Esophagus muscularis mucosa (tissue), 4 donors: ENCODE measurements at regions of chr2 and their contacts with region 1.

Region 1: GRCh38 chr2:102187496-102188150 is 800 bp downstream of the IL1RL2 start:
- DNase-seq: no peak
- H3K4me3 ChIP-seq: peak overlapping the region; percentile 56 to 61 (median 58)
- H3K27ac ChIP-seq: peak overlapping the region; percentile 42 to 48 (median 46)
- H3K4me1 ChIP-seq: peaks cover 6 to 16% (median 14%) of the 10 kb centered on the region in 4 donors
- H3K27me3 ChIP-seq: peaks cover 0 to 12% (median 0%) of the 10 kb centered on the region in 4 donors
- CTCF ChIP-seq: peak; percentile 15 to 44 (median 16)
- EP300 ChIP-seq: no peak
- POLR2A ChIP-seq: no peak

Region 2: GRCh38 chr2:102094917-102095316 is 92.7 kb before region 1 on chr2:
- intact Hi-C with region 1: no loop called
- DNase-seq: no peak
- H3K4me3 ChIP-seq: no peak overlapping the region
- H3K27ac ChIP-seq: no peak overlapping the region
- H3K4me1 ChIP-seq: no peaks in the 10 kb centered on the region
- H3K27me3 ChIP-seq: no peaks in the 10 kb centered on the region
- CTCF ChIP-seq: no peak
- EP300 ChIP-seq: no peak
- POLR2A ChIP-seq: no peak

Region 3: GRCh38 chr2:102206666-102207341 is 19.2 kb after region 1 on chr2:
- intact Hi-C with region 1: no loop called
- DNase-seq: no peak
- H3K4me3 ChIP-seq: no peak overlapping the region
- H3K27ac ChIP-seq: no peak overlapping the region
- H3K4me1 ChIP-seq: no peaks in the 10 kb centered on the region
- H3K27me3 ChIP-seq: no peaks in the 10 kb centered on the region
- CTCF ChIP-seq: no peak
- EP300 ChIP-seq: no peak
- POLR2A ChIP-seq: no peak

Region 4: DNA sequence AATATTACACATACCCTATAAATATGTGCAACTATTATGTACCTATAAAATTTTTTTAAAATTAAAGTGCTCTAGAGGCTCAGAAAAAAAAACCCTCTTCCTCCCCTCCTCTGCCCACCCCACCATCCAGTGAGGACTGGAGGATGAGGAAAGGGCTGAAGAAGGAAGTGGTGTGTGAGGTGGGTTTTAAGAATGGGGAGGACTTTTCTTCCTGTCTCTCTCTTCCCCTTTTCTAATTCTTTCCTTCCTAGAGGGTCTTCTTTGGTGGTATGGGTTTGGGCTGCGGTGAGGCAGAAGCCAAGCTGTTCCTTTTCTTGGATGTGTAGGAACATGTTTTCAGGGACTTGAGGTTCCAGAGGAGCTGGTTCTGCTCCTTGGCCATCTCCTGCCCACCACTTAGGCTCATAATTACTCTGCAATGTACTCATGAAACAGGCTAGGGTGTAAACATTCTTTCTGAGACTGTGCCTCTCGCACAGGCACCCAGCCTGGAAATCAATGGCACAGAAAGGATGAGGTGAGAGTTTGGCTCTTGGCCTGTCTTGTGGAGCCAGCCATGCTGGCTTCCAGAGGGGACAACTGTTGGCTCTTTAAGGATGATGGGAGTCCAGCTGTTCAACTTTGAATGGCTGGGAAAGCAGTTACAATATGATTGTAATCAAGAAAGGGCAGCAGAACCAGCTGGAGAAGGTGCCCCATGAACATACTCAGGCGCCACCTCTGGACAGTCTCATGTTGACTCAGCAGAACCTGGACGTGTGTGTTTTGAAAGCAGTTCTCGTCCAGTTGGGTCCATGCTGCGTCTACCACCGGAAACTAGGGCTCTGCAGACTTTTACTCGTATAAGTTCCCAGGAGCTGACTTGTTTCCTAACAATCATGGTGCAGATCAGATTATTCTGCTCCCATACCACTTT is 37.5 kb after region 1 on chr2:
- intact Hi-C with region 1: loop called (anchors 5 kb)
- DNase-seq: peak; percentile 80
- H3K4me3 ChIP-seq: no peak overlapping the region
- H3K27ac ChIP-seq: no peak overlapping the region
- H3K4me1 ChIP-seq: peaks cover 27 to 34% (median 31%) of the 10 kb centered on the region in 4 donors
- H3K27me3 ChIP-seq: no peaks in the 10 kb centered on the region
- CTCF ChIP-seq: no peak
- EP300 ChIP-seq: no peak
- POLR2A ChIP-seq: no peak

Region 5: DNA sequence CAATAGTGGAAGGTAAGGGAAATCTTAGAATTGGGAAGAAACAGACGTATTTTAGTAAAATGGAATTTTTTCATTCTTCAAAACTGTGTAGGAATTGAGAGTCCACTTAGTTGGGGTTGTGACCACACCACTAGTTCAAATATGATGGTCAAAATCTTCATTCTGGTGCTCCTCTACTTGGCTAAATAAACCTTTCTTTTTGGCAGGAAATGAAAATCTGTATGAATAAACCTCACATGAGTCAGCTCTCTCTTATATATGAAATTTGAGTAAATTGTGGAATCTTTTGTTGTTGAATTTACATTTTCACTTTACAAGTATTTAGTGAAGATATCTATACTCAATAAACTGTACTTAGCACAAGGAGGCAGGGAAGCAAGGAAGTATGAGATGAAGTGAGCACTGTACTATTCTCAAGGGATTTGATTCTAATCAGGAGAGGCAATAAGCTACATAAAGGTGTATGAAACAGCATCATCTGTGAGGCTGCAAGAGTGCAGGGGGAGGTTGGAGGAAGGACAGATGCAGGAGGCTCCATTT is 188.5 kb after region 1 on chr2:
- intact Hi-C with region 1: no loop called
- DNase-seq: no peak
- H3K4me3 ChIP-seq: no peak overlapping the region
- H3K27ac ChIP-seq: no peak overlapping the region
- H3K4me1 ChIP-seq: no peaks in the 10 kb centered on the region
- H3K27me3 ChIP-seq: no peaks in the 10 kb centered on the region
- CTCF ChIP-seq: no peak
- EP300 ChIP-seq: no peak
- POLR2A ChIP-seq: no peak